ENCODE measurements at regions of chr22 and their contacts with region 1.

Region 1: DNA sequence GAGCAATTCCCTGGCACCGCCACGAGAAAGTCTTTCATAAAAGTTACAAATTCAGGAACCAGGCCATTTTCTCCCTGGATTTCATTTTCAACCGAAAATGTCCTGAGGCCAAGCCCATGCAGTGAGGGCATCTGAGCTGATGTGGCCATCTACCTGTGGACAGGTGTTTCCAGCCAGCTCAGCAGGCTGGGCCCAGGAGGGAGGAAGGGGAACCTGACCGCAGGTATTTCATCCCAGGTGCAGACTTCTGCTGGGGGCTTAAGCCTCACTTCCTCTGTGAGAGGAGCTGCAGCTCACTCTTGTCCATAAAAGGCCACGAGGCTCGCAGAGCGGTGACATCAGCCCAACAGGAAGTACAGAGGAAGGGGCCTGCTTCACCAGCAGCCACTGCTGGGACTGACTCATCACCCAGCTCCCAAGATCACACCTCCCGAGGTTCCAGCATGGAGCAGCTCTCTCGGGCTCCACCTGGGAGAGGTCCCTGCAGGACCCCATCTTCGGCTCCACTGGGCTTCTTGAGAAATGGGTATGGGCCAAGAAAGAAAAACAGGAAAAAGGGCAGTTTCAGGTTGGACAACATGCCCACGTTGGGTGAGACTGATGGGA is 56.4 kb downstream of the MYH9 start:
- DNase-seq: peak; percentile 42 to 83 (median 73)
- ATAC-seq: peak; percentile 78
- H3K4me3 ChIP-seq: peak overlapping the region; percentile 57
- H3K4me3 Mint-ChIP-seq: peak overlapping the region; percentile 83 to 95 (median 92)
- H3K27ac ChIP-seq: peak overlapping the region; percentile 82
- H3K27ac Mint-ChIP-seq: peak overlapping the region; percentile 96 to 100 (median 99)
- H3K4me1 ChIP-seq: peaks cover 87 to 92% of the 10 kb centered on the region in 2 donors
- H3K4me1 Mint-ChIP-seq: peaks cover 84 to 100% (median 98%) of the 10 kb centered on the region in 7 donors
- H3K27me3 ChIP-seq: no peaks in the 10 kb centered on the region
- H3K27me3 Mint-ChIP-seq: no peaks in the 10 kb centered on the region

Region 2: GRCh38 chr22:36301384-36301828 is 30.0 kb before region 1 on chr22:
- CTCF ChIA-PET with region 1: interaction called, 25 read pairs
- POLR2A ChIA-PET with region 1: interaction called, 6 read pairs
- intact Hi-C with region 1: loop called in 1 of 2 experiments (anchors 1 kb)
- DNase-seq: peak; percentile 68 to 86 (median 80)
- ATAC-seq: peak; percentile 94
- H3K4me3 ChIP-seq: no peak overlapping the region
- H3K4me3 Mint-ChIP-seq: peak overlapping the region in 3 of 10 donors; percentile 6 to 40 (median 26)
- H3K27ac ChIP-seq: peak overlapping the region; percentile 15
- H3K27ac Mint-ChIP-seq: peak overlapping the region; percentile 56 to 81 (median 76)
- H3K4me1 ChIP-seq: peaks cover 0 to 3% of the 10 kb centered on the region in 2 donors
- H3K4me1 Mint-ChIP-seq: peaks cover 4 to 14% (median 11%) of the 10 kb centered on the region in 7 donors
- H3K27me3 ChIP-seq: no peaks in the 10 kb centered on the region
- H3K27me3 Mint-ChIP-seq: no peaks in the 10 kb centered on the region

Region 3: DNA sequence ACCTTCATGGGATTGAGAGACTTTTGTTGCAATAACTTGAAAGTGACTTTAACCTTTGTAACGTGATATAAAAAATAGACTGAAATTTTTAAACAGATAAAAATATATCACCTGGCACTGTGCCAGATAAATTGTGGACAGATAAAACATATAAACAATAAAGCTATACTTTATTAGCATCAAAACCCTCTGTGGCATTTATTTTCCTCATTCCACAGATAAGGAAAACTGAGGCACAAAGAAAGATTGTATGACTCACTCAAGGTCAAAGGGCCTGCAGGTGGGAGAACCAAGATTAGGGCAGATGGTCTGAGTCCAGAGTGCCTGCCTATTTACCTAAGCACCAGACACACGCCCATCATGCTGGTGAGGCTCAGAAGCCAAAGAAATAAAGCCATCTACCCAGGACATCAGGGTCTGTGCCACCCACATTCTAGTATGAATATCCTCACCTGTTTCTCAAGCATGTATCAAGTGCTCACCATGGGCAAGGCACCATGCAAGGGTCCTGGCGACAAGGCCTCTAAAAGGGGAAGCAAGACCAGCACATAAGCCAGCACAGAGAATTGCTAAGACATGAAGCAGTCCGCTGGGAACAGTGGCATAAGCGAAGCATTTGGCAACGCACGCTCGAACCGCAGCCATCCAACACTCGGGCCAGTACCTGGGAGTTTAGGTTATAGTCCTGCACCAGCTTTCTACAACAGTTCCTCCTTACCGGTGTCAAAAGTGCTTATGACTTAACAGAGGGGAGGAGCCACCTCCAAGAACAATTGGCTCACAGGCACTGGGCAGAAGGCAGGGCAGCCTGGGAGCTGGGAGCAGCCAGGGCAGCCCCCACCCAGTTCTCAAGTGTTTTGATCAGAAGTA is 38.7 kb after region 1 on chr22:
- CTCF ChIA-PET with region 1: interaction called, 8 read pairs
- POLR2A ChIA-PET with region 1: interaction called, 1,512 read pairs
- intact Hi-C with region 1: no loop called
- DNase-seq: peak in 1 of 9 donors; percentile 48
- ATAC-seq: peak; percentile 36
- H3K4me3 ChIP-seq: peak overlapping the region; percentile 43
- H3K4me3 Mint-ChIP-seq: peak overlapping the region; percentile 81 to 93 (median 87)
- H3K27ac ChIP-seq: peak overlapping the region; percentile 93
- H3K27ac Mint-ChIP-seq: peak overlapping the region; percentile 93 to 99 (median 97)
- H3K4me1 ChIP-seq: peaks cover 97 to 99% of the 10 kb centered on the region in 2 donors
- H3K4me1 Mint-ChIP-seq: peaks cover 81 to 100% (median 93%) of the 10 kb centered on the region in 7 donors
- H3K27me3 ChIP-seq: no peaks in the 10 kb centered on the region
- H3K27me3 Mint-ChIP-seq: no peaks in the 10 kb centered on the region

Region 4: DNA sequence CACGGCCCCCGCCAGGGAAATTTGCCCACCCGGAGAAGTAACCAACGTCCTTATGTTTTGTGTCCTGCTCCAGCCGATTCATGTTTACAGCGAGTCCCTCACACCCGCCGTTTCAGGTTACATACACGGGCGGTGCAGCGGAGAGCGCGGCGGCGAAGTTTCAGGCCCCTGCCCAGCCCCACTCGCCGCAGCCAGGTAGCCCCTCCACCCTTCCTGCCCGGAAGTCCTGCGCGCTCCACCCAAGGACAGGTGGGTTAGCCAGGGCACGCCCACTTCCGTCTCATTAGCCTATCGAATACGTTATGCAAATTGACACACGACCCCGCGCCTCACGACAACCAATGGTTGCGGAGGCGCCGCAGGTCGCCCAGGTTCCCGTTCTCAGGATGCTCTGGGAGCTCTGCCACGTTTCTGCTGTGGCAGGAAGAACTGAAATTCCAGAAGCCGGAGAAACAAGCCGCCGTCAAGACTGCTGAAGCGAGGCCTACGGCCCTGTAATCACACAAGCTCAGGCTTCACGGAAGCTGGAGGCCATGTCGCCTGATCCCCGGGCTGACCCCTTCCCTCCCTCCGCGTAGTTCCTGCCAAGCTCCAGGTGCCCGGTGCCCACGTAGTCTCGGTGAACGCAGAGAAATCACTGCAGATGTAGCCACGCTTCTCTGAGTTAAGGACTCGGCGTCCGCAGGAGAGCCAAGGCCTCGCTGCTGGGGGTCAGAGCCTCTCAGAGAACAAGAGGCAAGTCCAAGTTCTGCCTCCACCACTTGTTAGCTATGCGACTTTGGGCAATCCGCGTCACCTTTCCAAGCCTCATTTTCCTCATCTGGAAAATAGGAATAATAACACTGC is 78.7 kb after region 1 on chr22:
- CTCF ChIA-PET with region 1: no interaction called
- POLR2A ChIA-PET with region 1: interaction called, 18 read pairs
- intact Hi-C with region 1: no loop called
- DNase-seq: peak; percentile 46 to 77 (median 70)
- ATAC-seq: peak; percentile 89
- H3K4me3 ChIP-seq: peak overlapping the region; percentile 28
- H3K4me3 Mint-ChIP-seq: peak overlapping the region; percentile 59 to 82 (median 74)
- H3K27ac ChIP-seq: peak overlapping the region; percentile 70
- H3K27ac Mint-ChIP-seq: peak overlapping the region; percentile 69 to 92 (median 87)
- H3K4me1 ChIP-seq: peaks cover 31 to 40% of the 10 kb centered on the region in 2 donors
- H3K4me1 Mint-ChIP-seq: peaks cover 26 to 63% (median 55%) of the 10 kb centered on the region in 7 donors
- H3K27me3 ChIP-seq: no peaks in the 10 kb centered on the region
- H3K27me3 Mint-ChIP-seq: no peaks in the 10 kb centered on the region

Region 5: DNA sequence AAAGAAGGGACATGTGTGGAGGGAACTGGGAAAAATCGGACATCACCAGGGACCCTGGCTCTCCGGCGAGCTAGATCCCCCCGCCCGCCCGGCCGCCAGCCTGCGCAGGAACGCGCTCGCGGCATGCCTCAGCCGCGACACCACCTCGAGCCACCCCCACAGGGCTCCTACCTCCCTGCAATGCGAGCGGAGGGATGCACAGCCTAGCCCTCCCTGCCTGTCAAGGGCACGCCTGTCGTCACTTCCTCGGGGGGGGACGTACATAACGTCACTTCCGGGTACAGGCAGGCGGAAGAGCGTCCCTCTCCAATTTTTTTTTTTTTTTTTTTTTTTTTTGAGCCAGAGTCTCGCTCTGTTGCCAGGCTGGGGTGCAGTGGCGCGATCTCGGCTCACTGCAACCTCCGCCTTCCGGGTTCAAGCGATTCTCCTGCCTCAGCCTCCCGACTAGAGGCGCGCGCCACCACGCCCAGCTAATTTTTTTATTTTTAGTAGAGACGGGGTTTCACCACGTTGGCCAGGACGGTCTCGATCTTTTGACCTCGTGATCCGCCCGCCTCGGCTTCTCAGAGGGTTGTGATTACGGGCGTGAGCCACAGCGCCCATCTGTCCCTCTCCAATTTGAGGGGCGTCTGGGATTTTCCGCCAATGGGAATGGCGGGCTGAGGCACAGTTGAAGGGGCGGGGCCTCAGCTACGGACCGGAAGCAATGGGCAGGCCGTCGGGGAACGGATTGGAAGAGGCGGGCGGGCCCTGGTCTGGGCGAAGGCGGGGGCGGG is 150.2 kb after region 1 on chr22 and contains the start of gene TXN2:
- CTCF ChIA-PET with region 1: no interaction called
- POLR2A ChIA-PET with region 1: interaction called, 7 read pairs
- intact Hi-C with region 1: loop called in 1 of 2 experiments (anchors 1 kb)
- DNase-seq: peak; percentile 91 to 99 (median 98)
- ATAC-seq: peak; percentile 90
- H3K4me3 ChIP-seq: peak within 1 kb of the TSS; percentile 55
- H3K4me3 Mint-ChIP-seq: peak within 1 kb of the TSS; percentile 90 to 100 (median 96)
- H3K27ac ChIP-seq: peak within 1 kb of the TSS; percentile 96
- H3K27ac Mint-ChIP-seq: peak within 1 kb of the TSS; percentile 78 to 99 (median 95)
- H3K4me1 ChIP-seq: peaks cover 8 to 15% of the 10 kb centered on the region in 2 donors
- H3K4me1 Mint-ChIP-seq: peaks cover 15 to 30% (median 18%) of the 10 kb centered on the region in 7 donors
- H3K27me3 ChIP-seq: no peaks in the 10 kb centered on the region
- H3K27me3 Mint-ChIP-seq: peaks cover 0 to 2% (median 0%) of the 10 kb centered on the region in 5 donors
- total RNA-seq, gene TXN2: 35.5 to 69.9 (median 37.7) TPM

Measured in naive thymus-derived CD4-positive, alpha-beta T cell (primary cell).